ENCODE measurements at regions of chr4 and their contacts with region 1.

Region 1: GRCh38 chr4:80138551-80139538 is 58.5 kb upstream of the PRDM8 start:
- DNase-seq: peak; percentile 62
- H3K4me3 Mint-ChIP-seq: peak overlapping the region; percentile 62
- H3K27ac Mint-ChIP-seq: peak overlapping the region; percentile 88
- H3K4me1 Mint-ChIP-seq: peaks cover 72% of the 10 kb centered on the region
- H3K27me3 Mint-ChIP-seq: no peaks in the 10 kb centered on the region

Region 2: GRCh38 chr4:80153874-80154544 is 15.2 kb after region 1 on chr4:
- intact Hi-C with region 1: loop called (anchors 1 kb)
- DNase-seq: no peak
- H3K4me3 Mint-ChIP-seq: peak overlapping the region; percentile 21
- H3K27ac Mint-ChIP-seq: peak overlapping the region; percentile 90
- H3K4me1 Mint-ChIP-seq: peaks cover 27% of the 10 kb centered on the region
- H3K27me3 Mint-ChIP-seq: peaks cover 3% of the 10 kb centered on the region